CD14-positive monocyte (primary cell): ENCODE measurements at regions of chr5 and their contacts with region 1.

Region 1: GRCh38 chr5:81425569-81425968 is 31.6 kb upstream of the ACOT12 start:
- DNase-seq: peak; percentile 3 to 50 (median 19)
- H3K4me3 ChIP-seq: no peak overlapping the region
- H3K4me3 Mint-ChIP-seq: no peak overlapping the region
- H3K27ac ChIP-seq: no peak overlapping the region
- H3K27ac Mint-ChIP-seq: no peak overlapping the region
- H3K4me1 ChIP-seq: no peaks in the 10 kb centered on the region
- H3K4me1 Mint-ChIP-seq: peaks cover 9% of the 10 kb centered on the region
- H3K27me3 ChIP-seq: no peaks in the 10 kb centered on the region
- H3K27me3 Mint-ChIP-seq: no peaks in the 10 kb centered on the region
- CTCF ChIP-seq: peak; percentile 75

Region 2: DNA sequence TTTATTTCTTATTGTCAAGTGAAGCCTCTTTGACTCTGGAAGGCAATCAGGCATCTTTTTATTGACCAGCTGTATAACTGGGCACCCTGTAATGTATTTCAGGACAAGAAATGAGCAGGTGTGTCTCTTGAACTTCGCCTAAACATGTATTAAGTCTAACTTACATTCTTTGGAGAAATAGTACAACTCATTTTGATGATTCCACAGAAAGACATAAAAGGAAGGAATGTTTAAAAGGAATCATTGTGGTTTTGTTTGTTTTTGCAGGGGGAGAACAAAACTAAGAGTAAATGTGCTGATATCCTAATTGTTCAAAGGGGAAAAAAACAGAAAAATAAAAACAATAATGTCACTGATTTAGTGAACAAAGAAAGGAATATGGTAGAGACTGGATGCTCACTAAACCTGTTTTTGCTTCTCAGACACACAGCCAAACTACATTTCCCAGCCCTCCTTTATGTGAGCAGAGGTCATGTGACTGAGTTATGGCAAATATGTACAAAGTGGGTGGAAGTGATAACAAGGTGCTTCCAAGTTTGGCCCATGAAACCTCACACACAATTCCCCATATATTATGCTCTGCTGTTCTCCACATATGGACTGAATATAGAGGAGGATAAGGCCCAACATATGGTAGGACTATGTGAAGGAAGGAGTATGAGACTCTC is 118.9 kb after region 1 on chr5:
- intact Hi-C with region 1: no loop called
- DNase-seq: no peak
- H3K4me3 ChIP-seq: no peak overlapping the region
- H3K4me3 Mint-ChIP-seq: no peak overlapping the region
- H3K27ac ChIP-seq: no peak overlapping the region
- H3K27ac Mint-ChIP-seq: peak overlapping the region in 2 of 7 donors; percentile 1 to 33
- H3K4me1 ChIP-seq: no peaks in the 10 kb centered on the region
- H3K4me1 Mint-ChIP-seq: peaks cover 2% of the 10 kb centered on the region
- H3K27me3 ChIP-seq: no peaks in the 10 kb centered on the region
- H3K27me3 Mint-ChIP-seq: peaks cover 0 to 2% (median 0%) of the 10 kb centered on the region in 3 donors
- CTCF ChIP-seq: no peak

Region 3: DNA sequence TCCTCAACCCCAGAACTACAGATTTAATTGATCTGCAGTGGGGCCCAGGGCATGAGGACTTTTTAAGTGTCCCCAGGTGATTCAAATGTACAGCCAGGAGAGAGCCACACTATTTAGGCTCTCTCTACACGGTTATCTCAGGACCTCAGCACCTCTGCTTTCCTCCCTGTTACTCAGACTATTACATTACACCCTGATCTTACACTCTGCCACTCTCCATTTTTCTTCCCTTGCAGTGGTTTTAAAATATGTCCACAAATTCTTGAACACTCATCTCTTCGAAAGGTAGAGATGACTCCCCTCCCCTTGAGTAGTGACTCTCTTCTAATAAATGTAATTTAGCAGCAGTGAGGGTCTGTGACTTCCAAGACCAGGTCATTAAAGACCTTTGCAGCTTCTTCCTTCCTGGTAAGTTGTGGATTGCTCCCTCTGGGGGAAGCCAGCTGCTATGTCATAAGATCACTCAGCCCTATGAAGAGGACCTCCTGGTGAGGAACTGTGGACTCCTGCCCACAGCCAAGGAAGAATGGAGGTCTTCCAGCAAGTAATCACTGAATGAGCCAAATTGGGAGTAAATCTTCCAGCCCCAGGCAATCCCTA is 412.8 kb after region 1 on chr5:
- intact Hi-C with region 1: loop called in 1 of 2 experiments (anchors 5 kb)
- DNase-seq: peak; percentile 35 to 59 (median 57)
- H3K4me3 ChIP-seq: no peak overlapping the region
- H3K4me3 Mint-ChIP-seq: no peak overlapping the region
- H3K27ac ChIP-seq: no peak overlapping the region
- H3K27ac Mint-ChIP-seq: peak overlapping the region in 1 of 7 donors; percentile 16
- H3K4me1 ChIP-seq: no peaks in the 10 kb centered on the region
- H3K4me1 Mint-ChIP-seq: peaks cover 9% of the 10 kb centered on the region
- H3K27me3 ChIP-seq: no peaks in the 10 kb centered on the region
- H3K27me3 Mint-ChIP-seq: no peaks in the 10 kb centered on the region
- CTCF ChIP-seq: peak; percentile 69

Region 4: DNA sequence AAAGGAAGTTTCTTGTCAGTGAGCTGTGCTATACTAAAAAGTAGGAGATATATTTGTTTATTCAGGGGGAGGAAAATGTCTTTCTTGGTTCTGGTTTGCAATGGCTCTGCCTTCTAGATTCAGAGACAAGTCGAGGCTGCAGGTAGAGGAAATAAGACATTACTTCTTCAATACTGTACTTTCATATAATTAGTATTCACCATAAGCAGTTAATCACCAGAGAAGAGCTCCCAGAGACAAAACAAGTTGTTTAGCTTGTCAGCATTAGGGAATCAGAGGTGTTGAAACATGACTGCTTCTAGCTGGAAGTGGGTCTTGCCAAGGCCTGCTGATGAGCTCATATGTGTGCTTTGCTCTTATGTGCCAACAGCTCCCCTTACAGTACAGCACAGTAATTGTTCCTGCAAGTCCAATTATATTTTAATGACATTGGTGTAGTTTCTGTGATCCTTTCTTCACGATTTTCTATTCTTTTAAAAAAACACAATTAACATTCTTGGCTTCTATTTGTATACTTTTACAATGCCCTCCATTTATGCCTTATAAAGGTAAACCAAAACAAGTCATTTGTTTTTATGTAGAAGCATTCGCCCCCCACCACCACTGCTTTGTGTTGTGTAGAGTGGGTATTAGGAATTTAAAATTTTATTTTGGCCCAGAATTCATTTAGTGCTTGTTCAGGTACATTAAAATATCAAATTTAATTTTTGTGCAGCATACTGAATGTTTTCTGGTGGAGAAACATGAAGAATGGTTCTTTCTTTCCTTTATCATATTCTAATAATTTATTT is 740.4 kb after region 1 on chr5:
- intact Hi-C with region 1: loop called in 1 of 2 experiments (anchors 10 kb)
- DNase-seq: peak; percentile 59 to 78 (median 71)
- H3K4me3 ChIP-seq: no peak overlapping the region
- H3K4me3 Mint-ChIP-seq: no peak overlapping the region
- H3K27ac ChIP-seq: peak overlapping the region in 1 of 2 donors; percentile 3
- H3K27ac Mint-ChIP-seq: peak overlapping the region in 5 of 7 donors; percentile 2 to 59 (median 30)
- H3K4me1 ChIP-seq: no peaks in the 10 kb centered on the region
- H3K4me1 Mint-ChIP-seq: peaks cover 5% of the 10 kb centered on the region
- H3K27me3 ChIP-seq: no peaks in the 10 kb centered on the region
- H3K27me3 Mint-ChIP-seq: peaks cover 0 to 1% (median 0%) of the 10 kb centered on the region in 3 donors
- CTCF ChIP-seq: peak; percentile 73